ENCODE measurements at regions of chr17 and their contacts with region 1.

Region 1: DNA sequence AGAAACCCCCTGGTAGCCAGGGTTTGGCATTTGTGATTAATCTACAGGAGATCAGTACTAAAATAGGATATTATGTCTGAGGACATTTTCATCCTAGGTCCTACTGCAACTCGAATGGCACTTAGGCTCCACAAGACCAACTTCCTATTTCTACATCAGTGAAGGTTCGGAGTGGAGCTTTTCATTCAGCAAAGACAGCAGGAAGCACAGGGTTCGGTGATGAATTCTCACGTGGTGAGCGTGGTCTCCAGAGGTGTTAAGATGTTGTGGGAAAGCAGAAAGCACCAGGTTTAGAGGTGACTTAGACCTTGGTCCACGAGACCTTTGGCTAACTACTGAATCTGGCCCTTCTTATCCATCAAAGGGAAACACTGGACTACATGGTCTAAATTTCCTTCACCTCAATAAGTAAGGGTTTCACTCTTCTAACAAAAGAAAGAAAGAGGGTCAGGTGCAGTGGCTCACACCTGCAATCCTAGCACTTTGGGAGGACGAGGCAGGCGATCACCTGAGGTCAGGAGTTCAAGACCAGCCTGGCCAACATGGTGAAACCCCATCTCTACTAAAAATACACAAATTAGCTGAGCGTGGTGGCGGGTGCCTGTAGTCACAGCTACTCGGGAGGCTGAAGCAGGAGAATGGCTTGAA is 13.9 kb upstream of the HELZ start:
- DNase-seq: peak; percentile 41
- H3K4me3 Mint-ChIP-seq: no peak overlapping the region
- H3K27ac Mint-ChIP-seq: no peak overlapping the region
- H3K4me1 Mint-ChIP-seq: peaks cover 23% of the 10 kb centered on the region
- H3K27me3 Mint-ChIP-seq: no peaks in the 10 kb centered on the region

Region 2: DNA sequence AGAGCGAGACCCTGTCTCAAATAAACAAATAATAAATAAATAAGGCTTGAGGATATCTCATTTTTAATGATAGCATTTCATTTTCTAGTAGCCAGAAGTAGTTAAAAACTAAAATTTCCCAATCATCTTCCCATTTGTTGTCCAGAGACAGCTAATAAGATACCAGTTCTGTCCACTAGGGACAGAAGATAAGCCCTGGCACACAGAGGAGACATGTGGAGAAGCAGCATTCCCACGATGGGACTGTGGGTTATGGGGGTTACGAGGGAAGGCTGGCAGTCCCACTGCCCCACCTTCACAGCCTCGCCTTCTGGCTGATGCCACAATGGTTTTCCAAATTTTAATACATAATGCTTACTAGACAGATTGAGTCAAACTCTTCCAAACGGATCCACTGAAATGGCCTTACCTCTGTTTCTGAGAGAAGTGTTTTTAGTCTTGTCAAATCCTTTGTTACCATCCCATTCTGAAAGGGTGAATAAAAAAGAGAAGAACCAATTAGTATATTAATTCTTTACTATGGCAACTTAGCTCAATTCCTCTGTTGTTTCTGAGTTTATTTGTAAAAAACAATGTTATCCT is 58.1 kb before region 1 on chr17:
- CTCF ChIA-PET with region 1: no interaction called
- intact Hi-C with region 1: no loop called
- DNase-seq: no peak
- H3K4me3 Mint-ChIP-seq: no peak overlapping the region
- H3K27ac Mint-ChIP-seq: no peak overlapping the region
- H3K4me1 Mint-ChIP-seq: peaks cover 14% of the 10 kb centered on the region
- H3K27me3 Mint-ChIP-seq: no peaks in the 10 kb centered on the region

Region 3: DNA sequence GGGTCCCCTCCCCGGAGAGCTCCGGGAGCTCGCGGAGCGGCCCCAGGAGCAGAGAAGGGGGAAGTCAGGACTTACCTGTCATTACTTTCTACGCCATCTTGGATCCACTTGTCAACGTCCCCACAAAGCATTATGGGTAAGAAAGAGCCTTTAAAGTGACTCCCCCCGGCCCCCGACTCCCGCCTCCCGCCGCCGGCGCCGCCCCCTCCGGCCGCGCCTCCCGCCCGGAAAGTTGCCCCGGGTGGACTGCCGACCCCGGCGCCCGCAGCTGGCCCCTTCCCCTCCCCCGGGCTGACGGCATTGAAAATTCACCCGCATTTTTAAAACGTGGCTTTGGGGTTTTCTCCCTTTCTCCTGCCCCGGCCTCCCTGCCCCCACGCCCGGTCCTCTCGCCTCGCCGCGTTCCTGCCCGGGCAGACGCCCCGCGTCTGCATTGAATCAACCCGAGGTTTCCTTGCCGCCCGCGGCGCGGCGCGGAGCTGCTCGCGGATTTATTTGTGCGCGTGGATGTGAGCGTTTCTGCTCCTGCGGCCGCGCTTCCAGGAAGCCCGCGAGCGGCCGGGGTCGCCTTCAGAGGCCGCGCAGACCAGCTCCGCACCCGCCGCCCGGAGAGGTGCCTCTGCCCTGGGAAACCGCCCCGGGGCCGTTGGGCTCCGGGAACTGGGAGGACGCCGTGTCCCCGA is 13.7 kb before region 1 on chr17 and contains the start of gene HELZ:
- CTCF ChIA-PET with region 1: no interaction called
- intact Hi-C with region 1: loop called (anchors 1 kb)
- DNase-seq: peak; percentile 73
- H3K4me3 Mint-ChIP-seq: peak within 1 kb of the TSS; percentile 84
- H3K27ac Mint-ChIP-seq: peak within 1 kb of the TSS; percentile 76
- H3K4me1 Mint-ChIP-seq: peaks cover 36% of the 10 kb centered on the region
- H3K27me3 Mint-ChIP-seq: peaks cover 5% of the 10 kb centered on the region
- total RNA-seq, gene HELZ: 34.7 to 39.5 TPM

Measured in activated naive CD4-positive, alpha-beta T cell treated with anti-CD3 and anti-CD28 coated beads for 36 hours (primary cell).